ENCODE measurements at regions of chr2 and their contacts with region 1.

Region 1: DNA sequence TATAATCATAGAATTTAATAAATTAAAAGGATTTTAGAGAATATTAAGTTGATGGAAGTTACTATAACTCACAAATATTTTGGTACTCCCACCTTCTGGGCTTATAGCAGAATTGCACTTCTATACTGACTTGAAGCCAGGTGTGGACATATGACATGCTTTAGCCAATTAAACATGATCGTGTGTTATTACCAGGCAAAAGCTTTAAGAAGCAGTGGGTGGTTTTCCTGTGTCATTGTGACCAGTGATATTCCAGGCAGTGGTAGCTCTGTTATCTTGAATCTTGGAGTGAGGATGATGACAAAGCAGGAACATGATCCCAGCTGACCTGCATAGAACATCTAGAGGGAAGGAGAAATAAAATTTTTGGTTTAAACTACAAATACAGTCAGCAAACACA is 370.9 kb upstream of the ZEB2 start:
- DNase-seq: no peak
- ATAC-seq: peak; percentile 20 to 47 (median 35)
- H3K4me3 ChIP-seq: no peak overlapping the region
- H3K27ac ChIP-seq: no peak overlapping the region
- H3K4me1 ChIP-seq: peaks cover 0 to 21% (median 3%) of the 10 kb centered on the region in 12 donors
- H3K27me3 ChIP-seq: no peaks in the 10 kb centered on the region
- CTCF ChIP-seq: peak in 4 of 12 donors; percentile 8 to 23 (median 12)
- POLR2A ChIP-seq: no peak

Region 2: DNA sequence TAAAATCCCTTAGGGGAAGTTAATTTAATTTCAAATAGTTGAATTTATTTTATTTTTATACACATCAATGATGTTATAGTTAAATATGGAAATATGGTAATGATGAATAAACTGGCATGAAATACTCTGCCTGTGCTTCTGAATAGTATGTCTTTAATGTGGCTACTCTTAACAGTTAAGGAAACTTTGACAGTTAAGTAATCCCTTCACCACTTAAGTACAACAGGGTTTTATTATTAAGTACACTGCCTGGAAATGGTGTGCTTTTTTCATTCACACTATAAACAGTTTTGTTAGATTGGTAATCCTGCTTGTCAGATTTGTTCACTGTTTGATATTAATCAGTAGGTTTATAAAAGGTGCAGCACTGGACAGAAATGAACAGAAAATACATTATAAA is 41.1 kb after region 1 on chr2:
- intact Hi-C with region 1: loop called in 1 of 10 experiments (anchors 5 kb)
- DNase-seq: no peak
- ATAC-seq: no peak
- H3K4me3 ChIP-seq: no peak overlapping the region
- H3K27ac ChIP-seq: no peak overlapping the region
- H3K4me1 ChIP-seq: peaks cover 0 to 15% (median 0%) of the 10 kb centered on the region in 12 donors
- H3K27me3 ChIP-seq: no peaks in the 10 kb centered on the region
- CTCF ChIP-seq: no peak
- POLR2A ChIP-seq: no peak

Measured in heart left ventricle (tissue), 16 donors.